Activated B cell treated with CpG ODN at 0.5 μM for 24 hours (primary cell): ENCODE measurements at regions of chr14 and their contacts with region 1.

Region 1: DNA sequence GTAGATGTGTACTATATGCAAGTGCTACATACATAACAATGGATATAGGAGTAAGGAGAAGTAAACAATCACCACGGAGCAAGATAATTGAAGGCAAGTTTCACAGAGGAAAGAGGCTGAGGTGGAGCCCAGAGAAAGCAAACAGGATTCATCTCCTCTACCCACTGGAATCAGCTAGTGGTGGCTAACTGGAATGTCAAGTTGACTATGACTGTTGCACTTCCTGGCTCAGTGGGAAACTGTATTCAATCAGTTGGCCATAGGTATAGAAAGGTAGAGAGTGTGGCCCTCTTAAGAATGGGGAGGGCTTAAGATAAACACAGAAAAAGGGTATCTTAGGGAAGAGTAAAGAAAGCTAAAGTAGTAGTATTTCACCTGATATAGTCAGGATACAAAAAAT is 62.4 kb downstream of the MAP4K5 start:
- DNase-seq: no peak
- ATAC-seq: no peak
- H3K4me3 Mint-ChIP-seq: no peak overlapping the region
- H3K27ac Mint-ChIP-seq: no peak overlapping the region
- H3K4me1 Mint-ChIP-seq: no peaks in the 10 kb centered on the region
- H3K27me3 Mint-ChIP-seq: no peaks in the 10 kb centered on the region
- CTCF ChIP-seq: no peak

Region 2: GRCh38 chr14:49598485-49599300 is 871.3 kb before region 1 on chr14 and contains the start of gene LRR1:
- CTCF ChIA-PET with region 1: no interaction called
- POLR2A ChIA-PET with region 1: no interaction called
- intact Hi-C with region 1: loop called (anchors 5 kb)
- DNase-seq: peak; percentile 94
- ATAC-seq: peak; percentile 67
- H3K4me3 Mint-ChIP-seq: peak within 1 kb of the TSS; percentile 95
- H3K27ac Mint-ChIP-seq: peak within 1 kb of the TSS; percentile 96
- H3K4me1 Mint-ChIP-seq: peaks cover 60% of the 10 kb centered on the region
- H3K27me3 Mint-ChIP-seq: no peaks in the 10 kb centered on the region
- CTCF ChIP-seq: no peak
- total RNA-seq, gene LRR1: 15.1 and 19.9 TPM in 2 replicates